ENCODE measurements at regions of chr2 and their contacts with region 1.

Region 1: GRCh38 chr2:8456151-8456845 is 225.6 kb upstream of the ID2 start:
- DNase-seq: peak in 8 of 9 donors; percentile 44 to 71 (median 58)
- ATAC-seq: peak; percentile 75
- H3K4me3 ChIP-seq: peak overlapping the region; percentile 60
- H3K4me3 Mint-ChIP-seq: peak overlapping the region; percentile 68 to 88 (median 84)
- H3K27ac ChIP-seq: no peak overlapping the region
- H3K27ac Mint-ChIP-seq: peak overlapping the region in 8 of 9 donors; percentile 2 to 94 (median 54)
- H3K4me1 ChIP-seq: peaks cover 11 to 21% of the 10 kb centered on the region in 2 donors
- H3K4me1 Mint-ChIP-seq: peaks cover 13 to 45% (median 25%) of the 10 kb centered on the region in 7 donors
- H3K27me3 ChIP-seq: no peaks in the 10 kb centered on the region
- H3K27me3 Mint-ChIP-seq: peaks cover 0 to 17% (median 6%) of the 10 kb centered on the region in 5 donors

Region 2: GRCh38 chr2:7661477-7661876 is 794.8 kb before region 1 on chr2:
- CTCF ChIA-PET with region 1: no interaction called
- POLR2A ChIA-PET with region 1: no interaction called
- intact Hi-C with region 1: no loop called
- DNase-seq: no peak
- ATAC-seq: no peak
- H3K4me3 ChIP-seq: no peak overlapping the region
- H3K4me3 Mint-ChIP-seq: no peak overlapping the region
- H3K27ac ChIP-seq: no peak overlapping the region
- H3K27ac Mint-ChIP-seq: no peak overlapping the region
- H3K4me1 ChIP-seq: no peaks in the 10 kb centered on the region
- H3K4me1 Mint-ChIP-seq: peaks cover 0 to 26% (median 5%) of the 10 kb centered on the region in 7 donors
- H3K27me3 ChIP-seq: no peaks in the 10 kb centered on the region
- H3K27me3 Mint-ChIP-seq: no peaks in the 10 kb centered on the region

Region 3: GRCh38 chr2:8334866-8335325 is 121.4 kb before region 1 on chr2:
- CTCF ChIA-PET with region 1: no interaction called
- POLR2A ChIA-PET with region 1: no interaction called
- intact Hi-C with region 1: loop called in 1 of 2 experiments (anchors 2 kb)
- DNase-seq: no peak
- ATAC-seq: peak; percentile 76
- H3K4me3 ChIP-seq: no peak overlapping the region
- H3K4me3 Mint-ChIP-seq: peak overlapping the region in 1 of 10 donors; percentile 3
- H3K27ac ChIP-seq: no peak overlapping the region
- H3K27ac Mint-ChIP-seq: peak overlapping the region in 1 of 9 donors; percentile 62
- H3K4me1 ChIP-seq: peaks cover 14 to 22% of the 10 kb centered on the region in 2 donors
- H3K4me1 Mint-ChIP-seq: peaks cover 13 to 33% (median 14%) of the 10 kb centered on the region in 7 donors
- H3K27me3 ChIP-seq: no peaks in the 10 kb centered on the region
- H3K27me3 Mint-ChIP-seq: peaks cover 0 to 11% (median 0%) of the 10 kb centered on the region in 5 donors

Region 4: DNA sequence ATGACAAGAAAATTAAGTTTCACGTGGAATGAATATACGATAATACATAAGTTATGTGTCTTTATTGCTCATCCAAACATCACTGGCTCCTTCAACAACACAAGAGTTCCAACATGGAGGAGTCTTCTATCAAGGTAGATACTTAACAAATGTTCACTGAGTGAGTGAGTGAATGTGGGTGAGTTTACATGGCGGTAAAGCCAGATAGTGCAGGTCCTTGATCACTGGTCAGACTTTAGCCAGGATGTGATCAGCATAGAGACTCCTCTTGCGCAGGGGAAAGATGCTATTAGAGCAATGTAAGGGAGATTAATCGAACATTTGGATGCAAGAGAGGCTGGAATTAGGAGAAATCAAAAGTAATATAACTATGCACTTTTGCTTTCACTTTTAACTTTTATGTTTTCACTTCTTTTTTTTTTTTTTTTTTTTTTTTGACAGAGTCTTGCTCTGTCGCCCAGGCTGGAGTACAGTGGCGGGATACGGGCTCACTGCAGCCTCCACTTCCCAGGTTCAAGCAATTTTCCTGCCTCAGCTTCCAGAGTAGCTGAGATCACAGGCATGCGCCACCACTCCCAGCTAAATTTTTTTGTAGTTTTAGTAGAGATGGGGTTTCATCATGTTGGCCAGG is 23.5 kb before region 1 on chr2:
- CTCF ChIA-PET with region 1: no interaction called
- POLR2A ChIA-PET with region 1: no interaction called
- intact Hi-C with region 1: loop called in 1 of 2 experiments (anchors 2 kb)
- DNase-seq: peak in 2 of 9 donors; percentile 8 to 18
- ATAC-seq: no peak
- H3K4me3 ChIP-seq: no peak overlapping the region
- H3K4me3 Mint-ChIP-seq: peak overlapping the region in 9 of 10 donors; percentile 25 to 83 (median 73)
- H3K27ac ChIP-seq: no peak overlapping the region
- H3K27ac Mint-ChIP-seq: peak overlapping the region in 8 of 9 donors; percentile 9 to 91 (median 67)
- H3K4me1 ChIP-seq: peaks cover 4 to 10% of the 10 kb centered on the region in 2 donors
- H3K4me1 Mint-ChIP-seq: peaks cover 6 to 27% (median 17%) of the 10 kb centered on the region in 7 donors
- H3K27me3 ChIP-seq: no peaks in the 10 kb centered on the region
- H3K27me3 Mint-ChIP-seq: no peaks in the 10 kb centered on the region

Region 5: GRCh38 chr2:8472545-8473323 is 16.4 kb after region 1 on chr2:
- CTCF ChIA-PET with region 1: no interaction called
- POLR2A ChIA-PET with region 1: no interaction called
- intact Hi-C with region 1: loop called in 1 of 2 experiments (anchors 2 kb)
- DNase-seq: peak in 1 of 9 donors; percentile 8
- ATAC-seq: peak; percentile 36
- H3K4me3 ChIP-seq: peak overlapping the region; percentile 15
- H3K4me3 Mint-ChIP-seq: peak overlapping the region in 9 of 10 donors; percentile 5 to 58 (median 45)
- H3K27ac ChIP-seq: no peak overlapping the region
- H3K27ac Mint-ChIP-seq: peak overlapping the region; percentile 4 to 85 (median 15)
- H3K4me1 ChIP-seq: peaks cover 19 to 64% of the 10 kb centered on the region in 2 donors
- H3K4me1 Mint-ChIP-seq: peaks cover 34 to 86% (median 44%) of the 10 kb centered on the region in 7 donors
- H3K27me3 ChIP-seq: no peaks in the 10 kb centered on the region
- H3K27me3 Mint-ChIP-seq: no peaks in the 10 kb centered on the region

Region 6: GRCh38 chr2:8488001-8488738 is 31.9 kb after region 1 on chr2:
- CTCF ChIA-PET with region 1: no interaction called
- POLR2A ChIA-PET with region 1: no interaction called
- intact Hi-C with region 1: loop called in 1 of 2 experiments (anchors 2 kb)
- DNase-seq: peak in 5 of 9 donors; percentile 10 to 56 (median 41)
- ATAC-seq: peak; percentile 91
- H3K4me3 ChIP-seq: peak overlapping the region; percentile 35
- H3K4me3 Mint-ChIP-seq: peak overlapping the region; percentile 38 to 72 (median 64)
- H3K27ac ChIP-seq: no peak overlapping the region
- H3K27ac Mint-ChIP-seq: peak overlapping the region in 7 of 9 donors; percentile 25 to 88 (median 34)
- H3K4me1 ChIP-seq: peaks cover 8 to 53% of the 10 kb centered on the region in 2 donors
- H3K4me1 Mint-ChIP-seq: peaks cover 13 to 57% (median 15%) of the 10 kb centered on the region in 7 donors
- H3K27me3 ChIP-seq: no peaks in the 10 kb centered on the region
- H3K27me3 Mint-ChIP-seq: peaks cover 0 to 8% (median 0%) of the 10 kb centered on the region in 5 donors

Region 7: GRCh38 chr2:8514796-8515758 is 58.8 kb after region 1 on chr2:
- CTCF ChIA-PET with region 1: no interaction called
- POLR2A ChIA-PET with region 1: no interaction called
- intact Hi-C with region 1: loop called in 1 of 2 experiments (anchors 5 kb)
- DNase-seq: peak in 6 of 9 donors; percentile 11 to 65 (median 28)
- ATAC-seq: peak; percentile 77
- H3K4me3 ChIP-seq: peak overlapping the region; percentile 18
- H3K4me3 Mint-ChIP-seq: peak overlapping the region; percentile 5 to 63 (median 54)
- H3K27ac ChIP-seq: no peak overlapping the region
- H3K27ac Mint-ChIP-seq: peak overlapping the region in 6 of 9 donors; percentile 7 to 88 (median 30)
- H3K4me1 ChIP-seq: peaks cover 7 to 51% of the 10 kb centered on the region in 2 donors
- H3K4me1 Mint-ChIP-seq: peaks cover 15 to 67% (median 21%) of the 10 kb centered on the region in 7 donors
- H3K27me3 ChIP-seq: no peaks in the 10 kb centered on the region
- H3K27me3 Mint-ChIP-seq: peaks cover 0 to 1% (median 0%) of the 10 kb centered on the region in 5 donors

Measured in naive thymus-derived CD4-positive, alpha-beta T cell (primary cell).